ENCODE measurements at regions of chr4 and their contacts with region 1.

Region 1: DNA sequence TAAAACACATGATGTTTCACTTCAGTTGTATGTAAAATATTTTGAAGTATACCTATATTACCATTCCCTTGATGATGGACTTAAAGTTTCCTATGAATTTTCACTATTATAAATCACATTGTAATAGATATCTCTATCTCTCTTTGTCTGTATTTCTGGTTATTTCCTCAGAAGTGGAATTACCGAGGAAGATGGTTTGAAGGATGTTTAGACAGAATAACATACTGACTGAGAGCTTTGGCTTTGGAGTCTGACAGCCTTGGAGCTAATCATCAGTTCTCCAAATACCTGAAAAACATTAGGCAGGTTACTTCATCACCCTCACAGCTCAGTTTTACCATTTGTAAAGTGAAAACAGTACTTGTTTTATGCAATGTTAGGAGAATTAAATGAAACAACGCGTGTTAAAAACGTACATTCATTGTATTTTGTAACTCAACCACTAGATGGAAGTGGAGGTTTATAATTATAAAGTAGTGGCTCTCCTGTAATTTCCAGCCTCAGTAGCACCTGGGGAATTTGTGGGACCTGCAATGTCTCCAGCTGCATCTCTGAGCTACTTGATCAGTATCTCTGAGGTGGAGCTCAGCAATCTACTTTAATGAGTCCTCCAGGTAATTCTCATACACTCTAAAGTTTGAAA is 14.3 kb downstream of the JCHAIN start:
- DNase-seq: peak; percentile 62
- H3K4me3 Mint-ChIP-seq: no peak overlapping the region
- H3K27ac Mint-ChIP-seq: no peak overlapping the region
- H3K4me1 Mint-ChIP-seq: peaks cover 3% of the 10 kb centered on the region
- H3K27me3 Mint-ChIP-seq: peaks cover 9% of the 10 kb centered on the region

Region 2: DNA sequence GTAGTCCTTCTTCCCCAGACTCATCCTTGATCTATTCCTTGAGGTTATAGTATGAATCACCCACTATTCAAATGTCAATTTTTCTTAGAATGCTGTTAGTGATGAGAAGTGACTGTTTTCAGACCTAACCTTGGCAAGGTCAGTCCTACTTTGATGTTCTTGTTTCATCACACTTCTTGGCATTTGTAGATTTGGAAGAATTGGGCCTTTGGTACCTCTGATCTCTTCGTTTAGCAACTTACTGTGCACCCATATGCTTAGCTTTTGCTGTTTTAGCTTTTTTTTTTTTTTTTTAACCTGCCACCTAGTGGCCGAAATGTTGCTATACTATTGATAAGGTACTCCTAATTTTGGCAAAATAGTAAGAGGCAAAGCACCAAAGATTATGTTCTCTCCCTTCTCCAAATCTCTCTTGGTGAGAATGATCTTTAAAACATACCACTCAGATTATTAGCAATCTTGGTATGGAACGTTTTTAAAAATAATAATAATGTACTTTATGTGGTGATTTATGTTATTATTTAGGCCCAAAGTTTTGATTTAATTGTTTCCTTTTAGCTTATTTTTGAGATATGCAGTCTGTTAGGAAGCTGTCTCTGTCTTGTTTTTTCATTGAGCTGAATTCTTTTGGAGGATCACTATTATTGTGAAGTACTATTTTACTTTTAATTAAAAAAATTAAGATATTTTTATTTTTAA is 358.1 kb after region 1 on chr4:
- intact Hi-C with region 1: loop called (anchors 2 kb)
- DNase-seq: peak; percentile 81
- H3K4me3 Mint-ChIP-seq: peak overlapping the region; percentile 3
- H3K27ac Mint-ChIP-seq: peak overlapping the region; percentile 83
- H3K4me1 Mint-ChIP-seq: peaks cover 40% of the 10 kb centered on the region
- H3K27me3 Mint-ChIP-seq: no peaks in the 10 kb centered on the region

Region 3: DNA sequence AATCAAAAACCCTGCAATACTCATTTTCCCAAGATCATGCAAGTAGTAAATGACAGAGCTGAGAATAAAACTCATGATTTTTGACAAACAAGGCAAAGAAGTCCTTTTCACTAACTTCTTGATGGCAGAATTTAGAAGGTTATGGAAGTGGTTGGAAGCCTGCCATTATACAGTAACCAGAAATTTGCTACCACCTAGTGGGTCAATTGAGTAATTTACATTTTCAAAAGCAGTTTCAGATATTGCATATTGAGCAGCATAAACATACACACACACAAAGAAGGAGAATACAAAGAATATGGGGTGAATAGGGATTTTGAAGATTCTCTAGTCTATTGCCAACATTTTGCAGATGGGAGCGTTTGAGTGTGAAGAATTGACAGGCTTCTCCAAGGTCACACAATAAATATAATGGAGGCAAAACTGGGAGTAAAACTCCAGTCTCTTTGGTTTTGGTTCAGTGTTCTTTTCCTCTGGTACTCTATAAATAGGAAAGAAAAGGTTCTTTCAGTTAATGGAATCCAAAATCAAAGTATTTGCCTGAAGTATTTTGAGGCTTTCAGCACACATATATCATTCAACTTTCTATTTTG is 1061.7 kb after region 1 on chr4:
- intact Hi-C with region 1: loop called (anchors 5 kb)
- DNase-seq: no peak
- H3K4me3 Mint-ChIP-seq: no peak overlapping the region
- H3K27ac Mint-ChIP-seq: no peak overlapping the region
- H3K4me1 Mint-ChIP-seq: no peaks in the 10 kb centered on the region
- H3K27me3 Mint-ChIP-seq: no peaks in the 10 kb centered on the region

Region 4: GRCh38 chr4:72128741-72129140 is 1476.8 kb after region 1 on chr4:
- intact Hi-C with region 1: loop called (anchors 5 kb)
- DNase-seq: no peak
- H3K4me3 Mint-ChIP-seq: no peak overlapping the region
- H3K27ac Mint-ChIP-seq: no peak overlapping the region
- H3K4me1 Mint-ChIP-seq: no peaks in the 10 kb centered on the region
- H3K27me3 Mint-ChIP-seq: no peaks in the 10 kb centered on the region